ENCODE measurements at regions of chr1 and their contacts with region 1.

Region 1: DNA sequence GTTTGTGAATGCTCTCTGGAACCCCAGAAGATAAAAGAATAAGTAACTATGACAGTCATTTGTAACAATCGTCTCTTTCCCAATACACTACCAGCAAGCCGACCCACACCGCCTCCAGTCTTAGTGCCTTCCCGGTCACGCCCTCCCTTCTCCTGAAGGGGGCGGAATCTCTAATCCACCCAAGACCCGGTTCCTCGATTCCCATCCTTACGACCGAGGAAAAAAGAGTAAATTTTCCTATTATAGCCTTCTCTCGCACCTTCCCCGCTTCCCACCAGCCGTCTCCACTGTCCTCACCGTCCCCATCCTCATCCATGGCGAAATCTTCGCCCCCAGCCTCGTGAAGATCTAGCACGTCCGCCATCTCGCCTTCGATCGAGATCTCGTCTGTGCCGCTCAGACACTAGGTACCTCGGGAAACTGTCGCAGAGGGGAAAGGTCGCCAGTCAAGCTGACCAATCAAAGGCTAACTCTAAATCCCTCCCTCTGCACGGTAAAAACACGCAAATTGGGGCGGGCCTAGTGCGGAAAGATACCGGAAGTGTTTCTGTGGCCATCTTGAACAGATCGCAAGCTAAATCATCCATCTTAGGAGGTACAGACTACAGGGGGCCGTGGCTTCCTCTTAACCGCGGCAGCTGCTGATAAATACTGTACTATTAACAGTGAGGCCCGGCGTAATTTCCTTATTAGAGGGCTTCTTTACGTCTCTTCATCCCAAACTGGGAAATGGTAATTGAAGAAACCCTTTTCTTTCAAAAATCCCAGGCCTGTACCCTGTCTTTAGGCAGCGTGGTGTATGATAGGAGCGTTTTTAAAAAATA is at the start of gene RBM8A:
- DNase-seq: peak; percentile 97
- H3K4me3 ChIP-seq: peak within 1 kb of the TSS; percentile 77 to 99 (median 80)
- H3K27ac ChIP-seq: peak within 1 kb of the TSS; percentile 94
- H3K4me1 ChIP-seq: peaks cover 3% of the 10 kb centered on the region
- H3K27me3 ChIP-seq: no peaks in the 10 kb centered on the region
- CTCF ChIP-seq: peak; percentile 60 to 61
- total RNA-seq, gene RBM8A: 80.2 to 172 TPM

Region 2: DNA sequence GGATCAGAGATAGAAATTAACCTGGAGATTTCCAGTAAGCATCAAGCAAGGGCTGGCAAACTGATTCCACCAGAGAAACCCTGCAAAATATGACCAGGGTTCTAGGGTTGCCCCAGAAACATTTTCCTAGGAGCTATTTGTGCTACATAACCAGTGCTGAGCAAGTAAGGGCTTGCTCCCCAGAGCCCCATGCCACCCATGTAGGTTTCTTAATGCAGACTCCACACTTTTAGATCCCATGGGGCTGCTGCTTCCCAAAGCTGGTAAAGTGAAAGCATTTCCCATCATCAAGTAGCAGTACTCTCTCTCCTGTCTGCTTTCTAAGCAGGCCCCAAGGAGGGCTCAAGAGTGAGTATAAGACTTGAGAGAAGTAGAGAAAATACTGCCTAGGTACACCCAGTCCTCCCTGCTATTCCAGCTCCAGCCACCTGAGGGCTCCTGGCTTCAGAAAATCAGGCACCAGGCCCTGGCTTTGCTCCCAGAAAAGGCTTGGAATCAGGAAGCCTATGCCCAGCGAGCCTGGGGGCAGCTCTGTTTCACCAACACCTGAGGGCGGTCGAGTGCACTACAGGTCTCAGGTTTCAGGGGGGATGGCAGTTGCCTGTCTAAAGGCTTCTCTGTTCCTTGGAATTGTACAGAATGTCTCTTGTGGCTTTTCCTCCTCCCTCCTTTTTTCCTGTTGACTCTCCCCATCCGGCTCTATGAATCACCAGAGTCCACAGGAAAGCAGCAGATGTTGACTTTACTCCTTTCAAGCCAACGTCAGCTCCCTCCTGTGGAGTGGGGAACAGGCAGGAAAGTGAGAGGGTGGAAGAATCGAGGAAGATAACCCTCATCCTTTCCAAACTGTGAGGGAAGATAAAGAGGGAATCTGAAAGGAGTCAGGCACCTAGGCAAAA is 35.4 kb before region 1 on chr1:
- CTCF ChIA-PET with region 1: no interaction called
- dilution Hi-C with region 1: no loop called
- in situ Hi-C with region 1: no loop called
- intact Hi-C with region 1: no loop called
- DNase-seq: peak; percentile 99
- H3K4me3 ChIP-seq: peak overlapping the region in 2 of 3 experiments; percentile 1 to 8
- H3K27ac ChIP-seq: peak overlapping the region; percentile 97
- H3K4me1 ChIP-seq: peaks cover 36% of the 10 kb centered on the region
- H3K27me3 ChIP-seq: no peaks in the 10 kb centered on the region
- CTCF ChIP-seq: peak; percentile 94 to 99

Region 3: GRCh38 chr1:145957443-145958319 is 30.4 kb after region 1 on chr1 and contains the start of gene LIX1L:
- CTCF ChIA-PET with region 1: no interaction called
- dilution Hi-C with region 1: no loop called
- in situ Hi-C with region 1: no loop called
- intact Hi-C with region 1: loop called (anchors 1 kb)
- DNase-seq: peak; percentile 97
- H3K4me3 ChIP-seq: peak within 1 kb of the TSS; percentile 60 to 81 (median 71)
- H3K27ac ChIP-seq: peak within 1 kb of the TSS; percentile 62
- H3K4me1 ChIP-seq: peaks cover 45% of the 10 kb centered on the region
- H3K27me3 ChIP-seq: no peaks in the 10 kb centered on the region
- CTCF ChIP-seq: no peak
- total RNA-seq, gene LIX1L: 16.0 TPM